ENCODE measurements at regions of chr18 and their contacts with region 1.

Region 1: DNA sequence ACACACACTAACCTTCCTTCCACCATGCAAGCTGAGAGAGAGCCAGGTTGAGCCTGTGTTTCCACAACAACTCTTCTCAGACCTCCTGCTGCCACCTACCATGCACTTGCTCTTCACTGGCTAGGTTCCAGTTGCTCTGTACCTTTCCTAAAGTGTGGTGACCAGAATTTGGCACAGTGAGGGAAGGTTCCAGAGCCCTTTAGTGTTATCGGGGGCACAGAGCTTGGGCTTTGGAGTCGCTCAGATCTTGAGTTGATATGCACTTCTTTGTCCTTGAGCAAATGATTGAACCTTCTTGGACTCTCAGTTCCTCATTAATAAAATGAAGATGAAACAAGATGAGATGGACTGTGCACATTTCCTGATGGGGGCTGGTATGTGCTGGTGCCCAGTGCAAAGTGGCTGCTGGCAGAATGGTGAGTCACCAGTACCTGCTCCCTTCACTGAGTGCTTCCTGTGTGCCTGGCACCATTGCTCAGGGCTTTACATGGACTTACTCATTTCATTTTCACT is 47.1 kb downstream of the NEDD4L start:
- DNase-seq: no peak
- H3K4me3 ChIP-seq: no peak overlapping the region
- H3K27me3 ChIP-seq: no peaks in the 10 kb centered on the region
- CTCF ChIP-seq: no peak

Region 2: DNA sequence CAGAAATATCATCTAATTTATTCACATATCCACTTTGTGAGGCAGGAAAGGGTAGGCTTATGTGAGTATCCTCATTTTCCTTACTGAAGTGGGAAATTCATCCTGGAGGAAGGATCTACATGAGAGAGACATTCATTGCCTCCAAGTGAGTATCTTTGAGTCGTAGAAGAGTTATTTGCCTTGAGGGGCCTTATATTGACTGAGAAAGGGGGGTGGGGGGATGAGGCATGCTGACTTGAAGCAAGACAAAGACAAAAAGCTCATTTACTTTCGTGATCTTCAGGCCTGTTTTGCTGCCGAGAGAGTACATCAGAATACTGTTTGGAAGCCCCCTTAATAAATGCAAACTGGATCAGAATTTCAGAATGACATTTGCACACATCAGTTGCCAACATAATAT is 64.8 kb before region 1 on chr18:
- CTCF ChIA-PET with region 1: no interaction called
- POLR2A ChIA-PET with region 1: interaction called, 15 read pairs
- DNase-seq: no peak
- H3K4me3 ChIP-seq: no peak overlapping the region
- H3K27me3 ChIP-seq: peaks cover 4% of the 10 kb centered on the region
- CTCF ChIP-seq: no peak